ENCODE measurements at regions of chr1 and their contacts with region 1.

Region 1: GRCh38 chr1:112882271-112882744 is 73.7 kb downstream of the SLC16A1 start:
- DNase-seq: no peak
- ATAC-seq: peak; percentile 71

Region 2: DNA sequence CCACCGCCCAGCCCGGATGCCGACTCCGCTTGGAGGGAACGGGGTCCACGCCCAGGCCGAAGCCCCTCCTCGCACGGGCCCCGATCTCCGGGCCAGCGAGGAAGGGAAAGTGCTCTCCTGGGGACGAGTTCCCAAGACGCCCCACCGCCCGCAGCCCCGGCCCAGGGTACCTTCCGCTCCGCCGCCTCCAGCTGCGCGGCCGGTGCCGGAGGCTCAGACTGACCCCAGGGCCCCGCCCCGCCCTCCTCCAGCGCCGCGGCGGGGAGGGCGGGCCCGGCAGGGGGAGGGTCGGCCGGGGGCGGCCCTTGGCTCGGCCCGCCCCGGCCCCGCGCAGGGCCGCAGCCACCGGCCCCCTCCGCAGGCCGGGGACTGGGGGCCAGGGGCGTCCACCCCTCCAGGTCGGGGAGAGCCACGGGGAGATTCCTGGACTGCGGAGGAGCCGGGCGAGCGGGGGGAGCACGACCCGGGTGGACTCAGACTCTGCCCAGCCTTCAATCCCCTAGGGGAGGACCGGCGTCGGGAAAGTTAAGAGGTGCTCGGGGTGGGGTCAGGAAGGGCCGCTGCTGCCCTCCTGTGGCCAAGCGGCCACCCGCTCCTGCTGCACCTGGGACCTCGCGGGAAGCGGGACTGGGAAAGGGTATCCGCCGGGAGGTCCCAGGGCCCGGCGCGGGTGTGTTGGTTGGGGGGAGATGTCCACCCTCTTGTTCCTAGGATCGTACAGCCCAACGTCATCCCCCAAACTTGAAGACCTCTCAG is 175.2 kb before region 1 on chr1 and contains the start of gene RHOC:
- intact Hi-C with region 1: no loop called
- DNase-seq: peak; percentile 92
- ATAC-seq: peak; percentile 87
- total RNA-seq, gene RHOC: 96.0 TPM

Region 3: GRCh38 chr1:113042285-113043143 is 160.2 kb after region 1 on chr1:
- intact Hi-C with region 1: loop called (anchors 5 kb)
- DNase-seq: peak; percentile 74
- ATAC-seq: peak; percentile 94

Measured in left ventricle myocardium superior (tissue), 1 donor.